WTC11 (cell line): ENCODE measurements at regions of chr16 and their contacts with region 1.

Region 1: GRCh38 chr16:30984669-30985400 is at the start of gene HSD3B7:
- DNase-seq: peak; percentile 95
- ATAC-seq: peak; percentile 85
- H3K4me3 Mint-ChIP-seq: peak within 1 kb of the TSS; percentile 61
- H3K27ac Mint-ChIP-seq: 0 out of 2 replicates have a peak within 1 kb of the TSS, but pooled peaks have one; percentile 27
- H3K4me1 Mint-ChIP-seq: peaks cover 6% of the 10 kb centered on the region
- H3K27me3 Mint-ChIP-seq: no peaks in the 10 kb centered on the region
- CTCF ChIP-seq: peak; percentile 97
- total RNA-seq, gene HSD3B7: 4.1 to 4.5 TPM (median 4.5 TPM) in 3 replicates

Region 2: DNA sequence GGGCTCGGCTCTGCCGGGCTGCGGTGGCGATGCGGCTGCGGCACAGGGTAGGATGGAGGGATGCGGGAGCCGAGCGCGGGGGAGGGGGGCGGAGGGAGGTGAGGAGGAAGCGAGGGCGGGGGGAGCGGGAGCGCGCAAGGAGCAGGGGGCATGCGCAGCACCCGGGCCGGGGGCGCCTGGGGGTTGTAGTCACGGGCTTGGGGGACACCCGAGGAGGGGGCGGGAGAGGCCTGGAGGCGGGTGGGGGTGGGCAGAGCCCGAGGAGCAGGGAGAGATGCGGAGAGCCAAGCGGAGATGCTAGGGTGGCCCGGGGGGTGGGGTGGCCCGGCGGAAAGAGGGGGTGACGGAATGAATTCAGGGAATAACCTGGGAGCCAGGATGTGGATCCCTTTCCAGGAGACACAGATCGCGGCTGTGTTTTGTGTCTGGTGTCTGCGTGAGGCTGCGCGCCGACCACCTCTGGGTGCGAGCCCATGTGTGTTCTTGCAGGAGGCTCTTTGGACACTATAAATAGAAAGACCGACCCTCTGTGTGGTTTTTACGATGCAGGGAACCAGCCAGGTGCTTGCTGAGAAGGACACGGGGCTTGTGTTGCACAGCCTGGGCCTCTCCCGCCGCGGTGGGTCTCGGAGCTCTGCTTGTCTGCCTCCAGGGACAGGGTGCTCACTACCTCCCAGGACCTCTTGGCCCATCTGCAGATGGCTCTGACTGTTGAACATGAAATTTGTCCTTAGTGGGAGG is 25.9 kb after region 1 on chr16 and contains the start of gene STX1B:
- CTCF ChIA-PET with region 1: interaction called, 19 read pairs
- POLR2A ChIA-PET with region 1: no interaction called
- DNase-seq: peak; percentile 90
- ATAC-seq: peak; percentile 81
- H3K4me3 Mint-ChIP-seq: peak within 1 kb of the TSS; percentile 71
- H3K27ac Mint-ChIP-seq: no peak within 1 kb of the TSS; the same call in 1 of the 2 replicates
- H3K4me1 Mint-ChIP-seq: peaks cover 24% of the 10 kb centered on the region
- H3K27me3 Mint-ChIP-seq: peaks cover 34% of the 10 kb centered on the region
- CTCF ChIP-seq: no peak
- total RNA-seq, gene STX1B: 15.9 to 20.5 TPM (median 19.9 TPM) in 3 replicates

Region 3: DNA sequence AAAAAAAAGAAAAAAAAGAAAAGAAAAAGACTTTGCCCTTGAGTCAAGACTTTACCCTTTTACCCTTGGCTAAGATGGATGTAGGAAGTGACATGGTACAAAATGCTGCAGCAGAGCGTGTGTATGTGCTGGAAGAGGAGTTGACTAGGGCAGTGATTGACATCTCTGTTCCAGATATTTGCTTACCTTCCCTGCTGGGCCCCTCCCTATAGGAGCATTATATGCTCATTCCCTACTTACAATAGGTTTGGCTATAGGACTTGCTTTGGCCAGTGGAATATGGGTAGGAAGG is 59.3 kb after region 1 on chr16:
- CTCF ChIA-PET with region 1: interaction called, 83 read pairs
- POLR2A ChIA-PET with region 1: interaction called, 5 read pairs
- DNase-seq: no peak
- ATAC-seq: no peak
- H3K4me3 Mint-ChIP-seq: no peak overlapping the region
- H3K27ac Mint-ChIP-seq: no peak overlapping the region
- H3K4me1 Mint-ChIP-seq: peaks cover 5% of the 10 kb centered on the region; the same call in 1 of the 2 replicates
- H3K27me3 Mint-ChIP-seq: peaks cover 5% of the 10 kb centered on the region; the same call in 1 of the 2 replicates
- CTCF ChIP-seq: no peak

Region 4: GRCh38 chr16:31094424-31095120 is 109.7 kb after region 1 on chr16 and contains the start of gene VKORC1:
- CTCF ChIA-PET with region 1: interaction called, 11 read pairs
- POLR2A ChIA-PET with region 1: interaction called, 4 read pairs
- DNase-seq: peak; percentile 95
- ATAC-seq: peak; percentile 94
- H3K4me3 Mint-ChIP-seq: peak within 1 kb of the TSS; percentile 87
- H3K27ac Mint-ChIP-seq: peak within 1 kb of the TSS; percentile 84
- H3K4me1 Mint-ChIP-seq: peaks cover 14% of the 10 kb centered on the region
- H3K27me3 Mint-ChIP-seq: peaks cover 2% of the 10 kb centered on the region; the same call in 1 of the 2 replicates
- CTCF ChIP-seq: no peak
- total RNA-seq, gene VKORC1: 85.7 to 114 TPM (median 110 TPM) in 3 replicates

Region 5: DNA sequence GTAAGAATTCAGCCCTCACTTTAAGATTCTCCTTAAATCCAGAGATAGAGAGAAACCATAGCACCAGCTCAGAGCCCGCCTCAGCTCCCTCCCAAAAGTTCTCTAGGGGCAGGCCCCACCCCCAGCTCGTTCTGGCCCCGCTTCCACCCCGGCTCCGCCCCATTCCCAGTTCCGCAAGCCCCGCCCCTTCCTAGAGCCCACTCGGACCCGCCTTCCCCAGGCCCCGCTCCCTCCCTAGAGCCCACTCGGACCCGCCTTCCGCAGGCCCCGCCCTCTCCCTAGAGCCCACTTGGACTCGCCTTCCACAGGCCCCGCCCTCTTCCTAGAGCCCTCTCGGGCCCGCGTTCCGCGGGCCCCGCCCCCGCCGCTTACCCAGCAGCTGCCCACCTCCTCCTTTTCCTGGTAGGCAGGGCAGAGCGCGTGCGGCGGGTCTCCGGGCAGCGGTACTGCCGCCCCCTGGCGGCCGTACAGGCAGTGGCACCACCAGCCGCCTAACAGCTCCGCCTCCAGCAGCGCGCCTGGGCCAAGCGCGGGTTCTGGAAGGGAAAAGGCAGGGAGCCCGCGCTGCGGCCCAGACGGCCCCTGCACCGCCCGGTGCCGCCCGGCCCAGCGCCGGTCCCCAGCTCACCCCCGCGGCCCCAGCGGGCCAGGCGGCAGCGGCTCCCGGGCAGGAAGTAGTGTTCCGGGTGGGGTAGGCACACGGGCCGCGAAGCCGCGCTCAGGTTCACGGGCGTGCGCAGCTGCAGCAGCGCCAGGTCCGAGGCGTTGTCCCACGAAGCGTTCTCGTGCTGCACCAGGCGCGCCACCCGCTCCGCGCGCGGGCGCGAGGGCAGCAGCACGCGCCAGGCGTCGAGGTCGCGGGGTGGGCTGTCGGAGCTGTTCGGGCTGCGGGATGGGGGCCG is 157.5 kb after region 1 on chr16:
- CTCF ChIA-PET with region 1: interaction called, 30 read pairs
- POLR2A ChIA-PET with region 1: no interaction called
- DNase-seq: peak; percentile 100
- ATAC-seq: peak; percentile 91
- H3K4me3 Mint-ChIP-seq: peak overlapping the region; percentile 63
- H3K27ac Mint-ChIP-seq: peak overlapping the region; percentile 91
- H3K4me1 Mint-ChIP-seq: peaks cover 33% of the 10 kb centered on the region
- H3K27me3 Mint-ChIP-seq: peaks cover 41% of the 10 kb centered on the region
- CTCF ChIP-seq: peak; percentile 94